CD8-positive, alpha-beta T cell (primary cell): ENCODE measurements at regions of chr20 and their contacts with region 1.

Region 1: GRCh38 chr20:25696384-25697131 is at the start of gene ZNF337:
- DNase-seq: peak; percentile 85 to 95 (median 92)
- ATAC-seq: peak; percentile 98
- H3K4me3 ChIP-seq: peak within 1 kb of the TSS; percentile 62 to 78
- H3K4me3 Mint-ChIP-seq: peak within 1 kb of the TSS; percentile 95
- H3K27ac ChIP-seq: peak within 1 kb of the TSS; percentile 73 to 75
- H3K27ac Mint-ChIP-seq: peak within 1 kb of the TSS; percentile 93
- H3K4me1 ChIP-seq: peaks cover 8% of the 10 kb centered on the region
- H3K4me1 Mint-ChIP-seq: peaks cover 42% of the 10 kb centered on the region
- H3K27me3 ChIP-seq: no peaks in the 10 kb centered on the region
- H3K27me3 Mint-ChIP-seq: no peaks in the 10 kb centered on the region
- CTCF ChIP-seq: no peak
- total RNA-seq, gene ZNF337: 21.5 TPM

Region 2: GRCh38 chr20:25299806-25300205 is 396.8 kb before region 1 on chr20:
- CTCF ChIA-PET with region 1: no interaction called
- POLR2A ChIA-PET with region 1: no interaction called
- intact Hi-C with region 1: no loop called
- DNase-seq: no peak
- ATAC-seq: no peak
- H3K4me3 ChIP-seq: no peak overlapping the region
- H3K4me3 Mint-ChIP-seq: no peak overlapping the region
- H3K27ac ChIP-seq: no peak overlapping the region
- H3K27ac Mint-ChIP-seq: peak overlapping the region; percentile 71
- H3K4me1 ChIP-seq: peaks cover 5% of the 10 kb centered on the region
- H3K4me1 Mint-ChIP-seq: peaks cover 4% of the 10 kb centered on the region
- H3K27me3 ChIP-seq: no peaks in the 10 kb centered on the region
- H3K27me3 Mint-ChIP-seq: no peaks in the 10 kb centered on the region
- CTCF ChIP-seq: no peak

Region 3: DNA sequence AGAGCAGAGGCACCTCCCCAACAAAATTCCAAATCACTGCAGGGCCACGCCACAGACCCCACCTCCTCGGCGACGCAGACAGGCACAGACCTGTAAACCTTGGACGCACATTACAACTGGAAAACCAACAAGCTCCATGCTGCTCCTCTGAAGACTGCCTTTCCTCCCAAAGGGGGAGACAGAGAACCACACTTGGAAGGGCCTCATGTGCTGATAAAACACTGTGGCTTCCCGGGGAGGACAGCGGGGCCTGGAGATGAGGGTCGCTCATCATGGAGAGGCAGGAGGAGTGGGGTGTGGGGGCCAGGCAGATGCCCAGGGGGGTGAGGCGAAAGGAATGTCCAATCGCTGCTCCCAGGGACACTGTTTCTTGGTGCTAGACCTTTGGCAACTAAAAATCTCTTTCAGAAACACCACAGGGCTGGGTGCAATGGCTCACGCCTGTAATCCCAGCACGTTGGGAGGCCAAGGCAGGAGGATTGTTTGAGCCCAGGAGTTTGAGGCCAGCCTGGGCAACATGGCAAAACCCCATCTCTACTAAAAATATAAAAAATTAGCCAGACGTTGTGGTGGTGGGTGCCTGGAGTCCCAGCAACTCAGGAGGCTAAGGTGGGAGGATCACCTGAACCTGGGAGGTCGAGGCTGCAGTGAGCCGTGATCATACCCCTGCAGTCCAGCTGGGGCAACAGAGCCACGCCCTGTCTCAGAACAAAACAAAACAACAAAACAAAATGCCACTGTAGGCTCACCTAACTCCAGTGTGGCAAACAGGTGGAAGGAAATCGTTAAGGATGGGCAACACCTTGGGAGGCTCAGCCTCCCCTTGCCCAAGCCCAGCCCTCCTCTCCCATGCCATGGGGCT is 359.8 kb before region 1 on chr20:
- CTCF ChIA-PET with region 1: no interaction called
- POLR2A ChIA-PET with region 1: no interaction called
- intact Hi-C with region 1: no loop called
- DNase-seq: peak in 2 of 9 experiments; percentile 10 to 16
- ATAC-seq: no peak
- H3K4me3 ChIP-seq: no peak overlapping the region
- H3K4me3 Mint-ChIP-seq: no peak overlapping the region
- H3K27ac ChIP-seq: no peak overlapping the region
- H3K27ac Mint-ChIP-seq: peak overlapping the region; percentile 32
- H3K4me1 ChIP-seq: no peaks in the 10 kb centered on the region
- H3K4me1 Mint-ChIP-seq: peaks cover 12% of the 10 kb centered on the region
- H3K27me3 ChIP-seq: no peaks in the 10 kb centered on the region
- H3K27me3 Mint-ChIP-seq: no peaks in the 10 kb centered on the region
- CTCF ChIP-seq: no peak

Region 4: DNA sequence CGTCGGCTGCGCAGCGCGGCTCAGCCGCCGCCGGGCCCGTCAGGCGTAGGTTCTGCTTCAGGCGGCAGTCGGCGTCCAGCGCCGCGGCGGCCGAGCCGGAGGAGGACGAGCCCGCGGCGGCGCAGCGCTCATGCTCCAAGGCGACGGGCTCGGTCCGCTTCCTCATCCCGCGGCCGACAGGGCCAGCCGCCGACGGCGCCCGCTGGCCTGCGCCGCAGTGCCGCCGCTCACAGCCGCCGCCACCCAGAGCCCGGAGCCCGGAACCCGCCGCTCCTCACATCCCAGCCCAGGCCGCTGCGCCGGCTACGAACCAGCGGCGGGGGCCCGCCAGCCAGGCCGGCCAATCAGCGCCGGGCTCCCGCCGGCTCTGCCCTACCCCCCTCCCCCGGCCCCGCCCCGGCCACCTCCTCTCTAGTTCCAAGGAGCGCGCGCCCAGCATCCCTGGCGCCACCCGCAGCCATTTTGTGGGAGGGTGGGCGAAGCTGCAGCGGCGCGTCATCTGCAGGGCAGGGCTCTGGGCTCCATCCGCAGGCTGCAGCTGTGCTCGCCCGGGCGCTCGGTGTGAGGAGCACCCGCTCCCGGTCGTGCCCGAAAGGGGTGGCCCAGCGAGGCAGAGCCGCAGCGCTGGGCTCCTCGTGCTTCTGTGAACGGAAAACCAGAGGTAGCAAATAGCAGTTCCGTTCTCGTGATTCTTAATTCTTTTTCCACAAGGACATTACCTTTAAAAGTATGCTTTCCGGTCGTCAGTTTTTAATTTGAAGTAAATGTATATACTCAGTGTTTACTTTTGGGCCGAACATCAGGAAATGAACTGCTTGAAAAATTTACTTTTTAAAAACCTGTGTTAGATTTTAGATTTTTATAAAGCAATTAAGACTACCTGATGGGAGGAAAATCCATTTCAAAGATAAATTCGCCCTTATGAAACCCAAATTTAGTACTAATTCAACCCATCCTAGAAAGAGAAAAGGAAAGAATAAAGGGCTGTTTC is 305.7 kb before region 1 on chr20 and contains the start of gene ABHD12:
- CTCF ChIA-PET with region 1: no interaction called
- POLR2A ChIA-PET with region 1: no interaction called
- intact Hi-C with region 1: loop called (anchors 5 kb)
- DNase-seq: peak; percentile 88 to 96 (median 92)
- ATAC-seq: peak; percentile 91
- H3K4me3 ChIP-seq: peak within 1 kb of the TSS; percentile 55 to 70
- H3K4me3 Mint-ChIP-seq: peak within 1 kb of the TSS; percentile 85
- H3K27ac ChIP-seq: peak within 1 kb of the TSS; percentile 47 to 51
- H3K27ac Mint-ChIP-seq: peak within 1 kb of the TSS; percentile 84
- H3K4me1 ChIP-seq: peaks cover 5% of the 10 kb centered on the region
- H3K4me1 Mint-ChIP-seq: peaks cover 20% of the 10 kb centered on the region
- H3K27me3 ChIP-seq: no peaks in the 10 kb centered on the region
- H3K27me3 Mint-ChIP-seq: no peaks in the 10 kb centered on the region
- CTCF ChIP-seq: no peak
- total RNA-seq, gene ABHD12: 14.1 to 17.9 TPM

Region 5: DNA sequence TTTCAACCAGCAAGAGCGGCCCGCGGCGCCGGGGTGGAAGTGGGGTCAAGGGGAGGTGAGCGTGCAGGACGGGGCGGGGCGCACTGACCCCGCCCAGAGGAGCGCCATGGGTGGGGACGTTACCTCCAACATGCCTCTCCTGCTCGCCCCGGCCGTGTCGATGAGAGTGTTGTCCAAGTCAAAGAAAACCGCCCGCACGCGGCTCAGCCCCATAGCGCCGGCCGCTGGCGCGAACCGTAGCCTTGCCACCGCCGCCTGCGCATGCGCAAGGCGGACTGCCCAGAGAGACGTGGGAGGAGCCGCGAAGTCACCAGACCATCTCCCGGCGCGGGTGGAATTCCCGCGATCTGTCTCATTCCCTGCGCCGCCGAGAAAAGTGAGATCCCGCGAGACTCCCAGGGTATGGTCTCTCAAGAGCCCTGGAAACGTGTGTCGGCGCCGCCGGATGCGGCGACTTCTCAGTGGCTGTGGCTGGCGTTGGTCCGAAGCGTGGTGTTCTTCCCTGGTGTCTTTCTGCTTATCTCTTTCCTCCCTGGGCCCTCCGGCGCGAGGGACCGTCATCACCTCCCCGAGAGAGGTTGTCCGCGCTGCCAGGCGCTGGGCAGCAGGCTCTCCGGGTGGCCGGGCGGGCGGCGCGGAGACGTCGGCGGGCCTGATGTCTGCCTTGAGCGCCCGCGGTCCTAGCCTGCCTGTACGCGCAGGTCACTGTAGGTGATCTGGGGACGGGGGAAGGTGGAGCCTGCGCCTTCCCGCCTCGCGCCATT is 72.6 kb before region 1 on chr20 and contains the start of gene NANP:
- CTCF ChIA-PET with region 1: no interaction called
- POLR2A ChIA-PET with region 1: no interaction called
- intact Hi-C with region 1: loop called (anchors 1 to 2 kb)
- DNase-seq: peak; percentile 56 to 94 (median 78)
- ATAC-seq: peak; percentile 79
- H3K4me3 ChIP-seq: peak within 1 kb of the TSS; percentile 73 to 82
- H3K4me3 Mint-ChIP-seq: peak within 1 kb of the TSS; percentile 96
- H3K27ac ChIP-seq: peak within 1 kb of the TSS; percentile 48 to 67
- H3K27ac Mint-ChIP-seq: peak within 1 kb of the TSS; percentile 94
- H3K4me1 ChIP-seq: peaks cover 11% of the 10 kb centered on the region
- H3K4me1 Mint-ChIP-seq: peaks cover 20% of the 10 kb centered on the region
- H3K27me3 ChIP-seq: no peaks in the 10 kb centered on the region
- H3K27me3 Mint-ChIP-seq: no peaks in the 10 kb centered on the region
- CTCF ChIP-seq: no peak
- total RNA-seq, gene NANP: 2.0 to 2.2 TPM

Region 6: DNA sequence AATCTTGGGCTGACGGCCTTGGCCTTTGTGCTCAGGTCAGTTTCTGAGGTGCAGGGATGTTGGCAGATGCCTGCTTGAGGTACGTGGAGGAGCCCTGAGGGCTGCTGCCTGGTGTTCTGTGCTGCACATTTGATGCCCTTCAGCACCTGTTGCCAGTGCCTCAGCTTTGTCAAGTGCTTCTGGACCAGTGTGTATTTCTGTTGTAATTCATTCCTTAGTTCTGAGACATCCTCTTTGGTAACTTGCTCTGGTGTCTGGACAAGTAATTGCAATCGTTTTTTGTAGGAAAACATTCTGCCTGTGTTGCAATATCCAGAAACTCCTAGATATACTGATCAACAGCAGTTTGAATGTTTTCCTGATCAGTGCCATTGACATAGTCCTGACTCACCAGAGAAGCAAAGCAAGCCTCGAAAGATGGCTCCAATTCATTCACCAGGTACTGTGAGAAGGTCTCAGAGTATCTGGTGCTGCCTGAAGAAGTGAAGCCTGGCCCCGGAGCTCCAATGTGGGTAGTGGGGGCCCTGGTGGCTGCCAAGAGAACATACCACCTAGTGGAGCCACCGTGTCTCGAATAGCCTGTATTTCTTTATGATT is 26.6 kb before region 1 on chr20:
- CTCF ChIA-PET with region 1: no interaction called
- POLR2A ChIA-PET with region 1: no interaction called
- intact Hi-C with region 1: no loop called
- DNase-seq: no peak
- ATAC-seq: no peak
- H3K4me3 ChIP-seq: no peak overlapping the region
- H3K4me3 Mint-ChIP-seq: no peak overlapping the region
- H3K27ac ChIP-seq: no peak overlapping the region
- H3K27ac Mint-ChIP-seq: no peak overlapping the region
- H3K4me1 ChIP-seq: no peaks in the 10 kb centered on the region
- H3K4me1 Mint-ChIP-seq: peaks cover 2% of the 10 kb centered on the region
- H3K27me3 ChIP-seq: no peaks in the 10 kb centered on the region
- H3K27me3 Mint-ChIP-seq: no peaks in the 10 kb centered on the region
- CTCF ChIP-seq: no peak

Region 7: GRCh38 chr20:25739615-25740320 is 43.2 kb after region 1 on chr20:
- CTCF ChIA-PET with region 1: no interaction called
- POLR2A ChIA-PET with region 1: no interaction called
- intact Hi-C with region 1: loop called in 1 of 2 experiments (anchors 5 kb)
- DNase-seq: peak in 2 of 9 experiments; percentile 63 to 75
- ATAC-seq: peak; percentile 82
- H3K4me3 ChIP-seq: no peak overlapping the region
- H3K4me3 Mint-ChIP-seq: no peak overlapping the region
- H3K27ac ChIP-seq: no peak overlapping the region
- H3K27ac Mint-ChIP-seq: peak overlapping the region; percentile 12
- H3K4me1 ChIP-seq: peaks cover 12% of the 10 kb centered on the region
- H3K4me1 Mint-ChIP-seq: peaks cover 15% of the 10 kb centered on the region
- H3K27me3 ChIP-seq: no peaks in the 10 kb centered on the region
- H3K27me3 Mint-ChIP-seq: no peaks in the 10 kb centered on the region
- CTCF ChIP-seq: no peak

Region 8: DNA sequence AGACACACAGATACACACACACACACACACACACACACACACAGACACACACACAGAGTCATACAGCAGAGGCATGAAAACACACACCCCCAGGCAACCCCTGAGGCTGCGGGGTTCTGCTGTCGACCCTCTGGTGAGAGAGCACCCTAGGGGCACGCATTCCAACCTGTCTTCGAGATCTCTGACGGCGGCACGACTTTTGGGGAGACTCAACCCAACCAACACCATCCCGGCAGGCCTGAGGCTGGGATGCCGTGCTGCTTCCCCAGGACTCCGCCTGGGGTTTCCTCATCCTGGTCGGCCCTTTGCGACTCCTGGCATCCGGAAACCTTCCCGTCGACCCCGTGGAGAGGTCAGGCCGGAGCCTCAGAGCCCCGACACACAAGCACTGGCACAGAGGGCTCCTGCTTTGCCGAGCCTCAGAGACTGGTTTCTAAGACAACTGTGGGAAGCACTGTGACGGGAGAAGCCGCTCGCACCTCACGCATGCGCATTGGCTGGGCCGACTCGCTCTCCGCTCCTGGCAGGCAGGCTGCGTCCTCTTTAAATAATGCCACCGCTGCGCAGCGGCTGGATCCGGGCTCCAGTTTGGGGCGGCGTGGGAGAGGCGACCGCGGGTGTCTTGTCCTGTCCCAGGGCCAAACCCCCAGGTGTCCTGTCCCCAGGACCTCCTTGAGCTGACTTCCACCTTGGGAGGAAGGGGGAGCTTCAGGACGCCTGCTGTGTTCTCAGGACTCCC is 169.0 kb after region 1 on chr20:
- CTCF ChIA-PET with region 1: no interaction called
- POLR2A ChIA-PET with region 1: no interaction called
- intact Hi-C with region 1: loop called in 1 of 2 experiments (anchors 5 kb)
- DNase-seq: peak in 8 of 9 experiments; percentile 55 to 82 (median 72)
- ATAC-seq: peak; percentile 30
- H3K4me3 ChIP-seq: peak overlapping the region in 1 of 2 experiments; percentile 32
- H3K4me3 Mint-ChIP-seq: peak overlapping the region; percentile 59
- H3K27ac ChIP-seq: no peak overlapping the region
- H3K27ac Mint-ChIP-seq: no peak overlapping the region
- H3K4me1 ChIP-seq: peaks cover 48% of the 10 kb centered on the region
- H3K4me1 Mint-ChIP-seq: peaks cover 58% of the 10 kb centered on the region
- H3K27me3 ChIP-seq: peaks cover 8 to 16% of the 10 kb centered on the region in 2 experiments
- H3K27me3 Mint-ChIP-seq: peaks cover 65% of the 10 kb centered on the region
- CTCF ChIP-seq: no peak